Sigmoid colon (tissue), 7 donors: ENCODE measurements at regions of chr12 and their contacts with region 1.

Region 1: GRCh38 chr12:95473884-95474659 is at the start of gene METAP2:
- DNase-seq: peak; percentile 98
- H3K4me3 ChIP-seq: peak within 1 kb of the TSS; percentile 61 to 83 (median 74)
- H3K27ac ChIP-seq: peak within 1 kb of the TSS; percentile 81 to 93 (median 90)
- H3K4me1 ChIP-seq: peaks cover 0 to 46% (median 26%) of the 10 kb centered on the region in 4 donors
- H3K27me3 ChIP-seq: no peaks in the 10 kb centered on the region
- CTCF ChIP-seq: no peak
- EP300 ChIP-seq: peak in 1 of 4 donors; percentile 13
- POLR2A ChIP-seq: peak; percentile 90
- total RNA-seq, gene METAP2: 75.1 to 152 (median 85.0) TPM

Region 2: DNA sequence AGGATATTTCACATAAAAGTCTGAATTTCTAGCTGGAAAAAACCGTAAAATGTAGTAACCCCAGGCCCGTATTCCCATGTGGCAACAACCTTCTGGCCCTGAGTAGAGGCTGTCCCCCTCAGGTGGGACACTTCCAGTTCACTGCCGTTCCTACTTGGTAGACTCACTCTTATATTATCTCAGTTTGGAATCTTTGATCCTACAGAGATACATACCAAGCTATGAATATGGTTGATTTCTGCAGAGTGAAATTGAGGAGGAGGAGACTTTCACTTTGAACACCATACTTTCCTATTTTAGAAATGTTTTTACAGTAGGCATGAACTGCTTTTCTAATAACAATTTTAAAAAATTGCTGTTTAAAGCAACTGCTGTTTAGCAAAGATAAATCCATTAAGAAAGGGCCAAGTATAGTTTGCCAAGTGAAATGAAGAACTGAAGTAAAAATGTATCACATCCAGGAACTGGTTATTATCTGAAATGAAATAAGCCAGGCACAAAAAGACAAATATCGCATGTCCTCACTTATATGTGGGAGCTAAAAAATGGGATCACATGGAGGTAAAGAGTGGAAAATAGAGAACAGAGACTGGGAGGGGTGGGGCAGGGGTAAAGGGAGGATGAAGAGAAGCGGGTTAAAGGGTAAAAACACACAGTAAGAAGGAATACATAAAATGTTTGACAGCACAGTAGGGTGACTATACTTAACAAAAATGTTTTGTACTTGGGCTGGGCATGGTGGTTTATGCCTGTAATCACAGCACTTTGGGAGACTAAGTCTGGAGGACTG is 92.9 kb before region 1 on chr12:
- intact Hi-C with region 1: loop called (anchors 5 kb)
- DNase-seq: no peak
- H3K4me3 ChIP-seq: peak overlapping the region; percentile 28 to 54 (median 38)
- H3K27ac ChIP-seq: peak overlapping the region; percentile 77 to 89 (median 86)
- H3K4me1 ChIP-seq: peaks cover 0 to 70% (median 43%) of the 10 kb centered on the region in 4 donors
- H3K27me3 ChIP-seq: no peaks in the 10 kb centered on the region
- CTCF ChIP-seq: no peak
- EP300 ChIP-seq: peak in 2 of 4 donors; percentile 62 to 67
- POLR2A ChIP-seq: no peak

Region 3: GRCh38 chr12:95396849-95397468 is 77.1 kb before region 1 on chr12:
- intact Hi-C with region 1: loop called (anchors 5 kb)
- DNase-seq: no peak
- H3K4me3 ChIP-seq: no peak overlapping the region
- H3K27ac ChIP-seq: peak overlapping the region; percentile 15 to 54 (median 32)
- H3K4me1 ChIP-seq: peaks cover 0 to 26% (median 21%) of the 10 kb centered on the region in 4 donors
- H3K27me3 ChIP-seq: peaks cover 0 to 3% (median 0%) of the 10 kb centered on the region in 3 donors
- CTCF ChIP-seq: no peak
- EP300 ChIP-seq: no peak
- POLR2A ChIP-seq: no peak